T-cell (primary cell): ENCODE measurements at regions of chr21 and their contacts with region 1.

Region 1: DNA sequence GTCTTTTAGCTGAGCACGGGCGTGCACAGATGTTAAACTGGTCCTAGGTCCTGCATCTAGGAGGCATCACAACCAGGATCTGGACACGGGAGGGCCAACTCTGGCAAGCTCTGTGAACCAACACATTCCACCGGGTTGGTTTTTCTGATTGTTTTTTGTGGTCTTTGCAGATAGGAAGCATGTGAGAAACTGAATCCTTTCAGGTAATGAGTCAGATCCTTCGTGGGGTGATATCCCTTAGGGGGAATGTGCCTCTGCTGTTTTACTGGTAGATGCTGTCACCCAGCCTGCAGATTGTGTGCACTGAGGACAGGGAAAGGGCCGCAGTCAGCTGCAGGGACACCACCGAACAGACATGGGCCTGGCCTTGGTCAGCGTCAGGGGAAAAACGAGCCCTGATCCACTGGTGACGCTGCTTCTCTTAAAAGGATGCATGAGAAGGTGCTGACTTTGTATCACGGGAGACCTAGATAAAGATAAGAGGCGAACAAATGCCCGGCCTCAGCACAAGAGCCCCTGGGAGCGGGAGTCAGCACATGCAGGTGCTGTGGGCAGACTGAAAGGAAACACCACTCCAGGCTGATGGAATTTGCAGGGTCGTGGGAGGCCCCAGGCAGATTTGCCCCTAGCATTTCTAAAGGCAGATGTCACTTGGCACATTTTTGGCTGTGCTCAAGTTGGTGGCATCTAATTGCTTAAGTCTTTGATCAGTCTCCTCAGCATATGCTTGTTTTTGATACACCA is 51.1 kb downstream of the DOP1B start:
- DNase-seq: no peak
- ATAC-seq: no peak
- H3K4me3 ChIP-seq: no peak overlapping the region
- H3K4me3 Mint-ChIP-seq: no peak overlapping the region
- H3K27ac ChIP-seq: no peak overlapping the region
- H3K27ac Mint-ChIP-seq: no peak overlapping the region
- H3K4me1 ChIP-seq: peaks cover 0 to 3% of the 10 kb centered on the region in 2 experiments
- H3K4me1 Mint-ChIP-seq: peaks cover 0 to 13% (median 4%) of the 10 kb centered on the region in 3 donors
- H3K27me3 ChIP-seq: no peaks in the 10 kb centered on the region
- H3K27me3 Mint-ChIP-seq: no peaks in the 10 kb centered on the region

Region 2: DNA sequence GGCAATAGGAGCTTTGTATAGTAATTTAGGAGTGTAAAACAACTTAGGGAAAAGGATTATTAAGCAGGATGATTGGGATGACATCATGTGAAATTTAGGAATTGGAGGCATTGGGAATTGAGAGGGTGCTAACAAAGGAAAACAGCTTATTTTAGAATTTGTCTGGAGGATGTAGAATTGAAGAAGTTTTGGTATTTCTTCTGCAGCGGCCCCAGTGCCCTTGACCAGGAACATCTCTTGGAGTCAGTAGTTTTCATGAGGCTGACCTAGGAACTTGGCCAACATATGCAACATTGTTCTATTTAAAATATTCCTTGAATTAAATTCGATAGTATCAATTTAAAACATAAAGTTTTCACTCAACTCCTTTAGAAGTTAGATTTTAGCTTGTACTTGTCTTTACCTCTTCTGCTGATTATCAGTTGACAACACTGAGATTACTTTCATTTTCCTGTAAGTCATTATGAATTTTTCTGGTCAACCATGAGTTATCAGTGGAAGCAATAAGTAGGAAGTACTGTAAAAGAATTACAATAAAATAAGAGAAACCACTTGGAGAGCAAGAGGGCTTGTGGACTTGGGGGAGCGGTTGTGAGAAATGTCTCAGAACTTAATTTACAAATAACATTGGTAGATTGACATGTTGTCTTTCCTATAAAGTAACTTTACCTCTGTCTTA is 1211.6 kb after region 1 on chr21:
- CTCF ChIA-PET with region 1: no interaction called
- POLR2A ChIA-PET with region 1: interaction called in 1 of 2 experiments, 10 read pairs
- DNase-seq: no peak
- ATAC-seq: no peak
- H3K4me3 ChIP-seq: no peak overlapping the region
- H3K4me3 Mint-ChIP-seq: peak overlapping the region in 2 of 3 donors; percentile 12 to 39
- H3K27ac ChIP-seq: peak overlapping the region; percentile 24
- H3K27ac Mint-ChIP-seq: peak overlapping the region; percentile 84 to 91
- H3K4me1 ChIP-seq: peaks cover 12 to 31% of the 10 kb centered on the region in 2 experiments
- H3K4me1 Mint-ChIP-seq: peaks cover 85 to 87% (median 85%) of the 10 kb centered on the region in 3 donors
- H3K27me3 ChIP-seq: no peaks in the 10 kb centered on the region
- H3K27me3 Mint-ChIP-seq: no peaks in the 10 kb centered on the region